AG04450 (cell line): ENCODE measurements at regions of chr14 and their contacts with region 1.

Region 1: DNA sequence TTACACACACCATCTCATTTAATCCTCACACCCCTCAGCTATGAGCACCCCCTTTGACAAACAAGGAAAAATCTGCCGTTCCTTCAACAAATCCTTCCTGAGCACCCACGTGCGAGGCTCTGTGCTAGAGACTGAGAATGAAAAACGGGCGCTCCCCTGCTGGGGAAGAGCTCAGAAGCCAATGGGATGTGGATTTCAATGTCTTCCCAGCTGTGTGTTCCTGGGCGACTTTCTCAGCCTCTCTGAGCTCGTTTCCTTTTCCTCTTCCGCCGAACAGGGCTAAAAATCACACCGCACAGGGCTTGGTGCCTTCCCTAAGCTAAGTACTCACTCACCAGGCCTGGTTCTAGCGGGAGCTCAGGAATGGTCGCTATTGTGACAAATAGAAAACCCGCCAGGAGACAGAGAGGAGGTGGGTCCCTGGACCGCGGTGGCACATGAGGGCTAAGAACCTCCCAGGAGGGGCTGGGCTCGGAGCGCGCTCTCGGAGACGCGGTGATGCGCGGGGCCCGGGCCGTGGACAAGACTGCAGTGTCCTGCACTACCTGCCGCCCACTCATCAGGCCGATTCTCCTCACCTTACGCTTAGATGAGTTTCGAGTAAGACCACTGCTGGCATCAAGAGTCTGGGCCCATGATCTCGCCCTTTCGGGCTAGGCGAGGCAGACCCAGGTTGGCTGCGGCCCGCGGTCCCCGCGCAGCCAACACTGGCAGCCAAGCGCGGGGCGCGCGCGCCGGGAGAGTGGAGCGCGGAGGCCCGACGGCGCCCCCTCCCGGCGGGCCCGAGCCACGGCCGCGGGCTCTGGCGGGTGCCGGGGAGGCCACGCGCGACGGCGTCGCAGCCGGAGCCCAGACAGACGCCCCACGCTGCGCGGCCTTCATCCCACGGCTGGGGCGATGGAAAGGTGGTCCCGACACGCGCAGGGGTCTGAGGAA is 17.0 kb downstream of the ZDHHC22 start:
- DNase-seq: no peak
- H3K4me3 ChIP-seq: peak overlapping the region; percentile 61
- H3K27ac ChIP-seq: no peak overlapping the region
- H3K27me3 ChIP-seq: peaks cover 43% of the 10 kb centered on the region
- CTCF ChIP-seq: no peak; the same call in 1 of the 2 replicates

Region 2: GRCh38 chr14:76820700-76821099 is 303.9 kb before region 1 on chr14:
- CTCF ChIA-PET with region 1: interaction called, 15 read pairs
- POLR2A ChIA-PET with region 1: no interaction called
- DNase-seq: no peak
- H3K4me3 ChIP-seq: no peak overlapping the region
- H3K27ac ChIP-seq: no peak overlapping the region
- H3K27me3 ChIP-seq: peaks cover 12% of the 10 kb centered on the region
- CTCF ChIP-seq: no peak